Heart right ventricle (tissue), 16 donors: ENCODE measurements at regions of chr9 and their contacts with region 1.

Region 1: DNA sequence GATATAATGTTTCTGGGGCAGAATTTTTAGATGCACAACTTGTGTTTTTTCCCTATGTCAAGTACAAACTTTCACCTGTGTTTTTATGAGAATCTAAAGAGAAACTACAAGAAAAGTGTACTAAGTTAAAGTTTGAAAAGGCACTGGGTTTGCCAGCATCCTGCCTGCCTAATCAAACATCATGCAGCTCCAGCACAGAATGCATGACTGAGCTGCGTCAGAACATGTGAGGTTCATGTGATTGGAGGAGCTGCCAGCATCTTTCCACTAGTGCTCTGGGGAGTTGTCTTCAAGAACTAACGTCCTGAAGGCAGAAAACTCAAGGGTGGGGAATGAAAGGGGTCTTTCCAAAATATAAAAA is 46.1 kb upstream of the RIC1 start:
- DNase-seq: peak in 1 of 2 donors; percentile 40
- ATAC-seq: peak in 6 of 8 donors; percentile 52 to 87 (median 68)
- H3K4me3 ChIP-seq: no peak overlapping the region
- H3K27ac ChIP-seq: peak overlapping the region in 1 of 10 donors; percentile 3
- H3K4me1 ChIP-seq: peaks cover 0 to 31% (median 13%) of the 10 kb centered on the region in 9 donors
- H3K27me3 ChIP-seq: no peaks in the 10 kb centered on the region
- CTCF ChIP-seq: no peak

Region 2: GRCh38 chr9:5186416-5187169 is 396.2 kb before region 1 on chr9:
- intact Hi-C with region 1: loop called in 2 of 10 experiments (anchors 5 kb)
- DNase-seq: peak in 1 of 2 donors; percentile 29
- ATAC-seq: peak in 6 of 8 donors; percentile 53 to 80 (median 72)
- H3K4me3 ChIP-seq: no peak overlapping the region
- H3K27ac ChIP-seq: no peak overlapping the region
- H3K4me1 ChIP-seq: no peaks in the 10 kb centered on the region
- H3K27me3 ChIP-seq: peaks cover 0 to 17% (median 0%) of the 10 kb centered on the region in 7 donors
- CTCF ChIP-seq: peak; percentile 35 to 78 (median 71)

Region 3: GRCh38 chr9:5437254-5438216 is 145.3 kb before region 1 on chr9 and contains the start of gene PLGRKT:
- intact Hi-C with region 1: loop called in 1 of 10 experiments (anchors 5 kb)
- DNase-seq: peak; percentile 95
- ATAC-seq: peak; percentile 99
- H3K4me3 ChIP-seq: peak within 1 kb of the TSS; percentile 39 to 87 (median 67)
- H3K27ac ChIP-seq: peak within 1 kb of the TSS; percentile 41 to 97 (median 92)
- H3K4me1 ChIP-seq: peaks cover 0 to 26% (median 22%) of the 10 kb centered on the region in 9 donors
- H3K27me3 ChIP-seq: no peaks in the 10 kb centered on the region
- CTCF ChIP-seq: peak in 6 of 9 donors; percentile 10 to 53 (median 33)
- total RNA-seq, gene PLGRKT: 30.1 to 53.0 (median 36.3) TPM

Region 4: DNA sequence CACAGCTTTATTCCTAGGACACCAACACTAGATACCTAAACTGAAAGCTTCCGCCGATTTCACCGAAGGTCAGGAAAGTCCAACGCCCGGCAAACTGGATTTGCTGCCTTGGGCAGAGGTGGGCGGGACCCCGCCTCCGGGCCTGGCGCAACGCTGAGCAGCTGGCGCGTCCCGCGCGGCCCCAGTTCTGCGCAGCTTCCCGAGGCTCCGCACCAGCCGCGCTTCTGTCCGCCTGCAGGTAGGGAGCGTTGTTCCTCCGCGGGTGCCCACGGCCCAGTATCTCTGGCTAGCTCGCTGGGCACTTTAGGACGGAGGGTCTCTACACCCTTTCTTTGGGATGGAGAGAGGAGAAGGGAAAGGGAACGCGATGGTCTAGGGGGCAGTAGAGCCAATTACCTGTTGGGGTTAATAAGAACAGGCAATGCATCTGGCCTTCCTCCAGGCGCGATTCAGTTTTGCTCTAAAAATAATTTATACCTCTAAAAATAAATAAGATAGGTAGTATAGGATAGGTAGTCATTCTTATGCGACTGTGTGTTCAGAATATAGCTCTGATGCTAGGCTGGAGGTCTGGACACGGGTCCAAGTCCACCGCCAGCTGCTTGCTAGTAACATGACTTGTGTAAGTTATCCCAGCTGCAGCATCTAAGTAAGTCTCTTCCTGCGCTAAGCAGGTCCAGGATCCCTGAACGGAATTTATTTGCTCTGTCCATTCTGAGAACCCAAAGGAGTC is 132.3 kb before region 1 on chr9 and contains the start of gene CD274:
- intact Hi-C with region 1: loop called in 5 of 10 experiments (anchors 2 to 5 kb)
- DNase-seq: peak; percentile 88 to 90
- ATAC-seq: peak; percentile 97 to 99 (median 99)
- H3K4me3 ChIP-seq: peak within 1 kb of the TSS; percentile 29 to 80 (median 64)
- H3K27ac ChIP-seq: peak within 1 kb of the TSS; percentile 38 to 91 (median 87)
- H3K4me1 ChIP-seq: peaks cover 3 to 76% (median 28%) of the 10 kb centered on the region in 9 donors
- H3K27me3 ChIP-seq: no peaks in the 10 kb centered on the region
- CTCF ChIP-seq: peak; percentile 57 to 90 (median 68)
- total RNA-seq, gene CD274: 11.3 to 44.0 (median 13.5) TPM

Region 5: GRCh38 chr9:5459289-5459829 is 123.5 kb before region 1 on chr9:
- intact Hi-C with region 1: loop called in 4 of 10 experiments (anchors 5 kb)
- DNase-seq: no peak
- ATAC-seq: peak in 1 of 8 donors; percentile 52
- H3K4me3 ChIP-seq: no peak overlapping the region
- H3K27ac ChIP-seq: peak overlapping the region in 1 of 10 donors; percentile 59
- H3K4me1 ChIP-seq: peaks cover 0 to 40% (median 3%) of the 10 kb centered on the region in 9 donors
- H3K27me3 ChIP-seq: no peaks in the 10 kb centered on the region
- CTCF ChIP-seq: no peak

Region 6: DNA sequence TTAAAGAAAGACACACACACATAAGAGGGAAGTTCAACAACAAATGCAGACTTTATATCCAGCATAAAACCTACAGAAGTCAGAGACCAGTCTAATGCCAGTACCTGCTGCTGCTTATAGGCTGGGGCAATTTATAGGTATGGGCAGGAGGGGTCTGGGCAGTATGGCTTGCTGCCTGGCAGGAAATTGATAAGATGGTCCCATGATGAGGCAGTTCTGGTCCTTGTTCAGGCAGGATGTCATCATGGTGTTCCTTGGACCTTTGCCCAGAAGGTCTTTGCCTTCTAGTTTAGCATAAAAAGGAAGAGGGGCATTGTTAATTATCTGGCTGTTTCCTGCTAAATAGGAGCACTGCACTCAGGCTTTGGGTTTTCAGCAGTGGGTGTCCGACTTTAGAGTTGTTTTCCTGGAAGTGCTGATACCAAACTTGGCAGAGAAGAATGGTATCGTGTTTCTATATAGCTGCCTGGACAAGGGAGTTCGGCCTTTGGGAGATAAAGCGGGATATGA is 82.9 kb before region 1 on chr9:
- intact Hi-C with region 1: loop called in 1 of 10 experiments (anchors 5 kb)
- DNase-seq: peak in 1 of 2 donors; percentile 70
- ATAC-seq: peak; percentile 14 to 78 (median 69)
- H3K4me3 ChIP-seq: no peak overlapping the region
- H3K27ac ChIP-seq: peak overlapping the region; percentile 71 to 90 (median 82)
- H3K4me1 ChIP-seq: peaks cover 7 to 36% (median 29%) of the 10 kb centered on the region in 9 donors
- H3K27me3 ChIP-seq: no peaks in the 10 kb centered on the region
- CTCF ChIP-seq: no peak